HEK293 (cell line): ENCODE measurements at regions of chr4 and their contacts with region 1.

Region 1: DNA sequence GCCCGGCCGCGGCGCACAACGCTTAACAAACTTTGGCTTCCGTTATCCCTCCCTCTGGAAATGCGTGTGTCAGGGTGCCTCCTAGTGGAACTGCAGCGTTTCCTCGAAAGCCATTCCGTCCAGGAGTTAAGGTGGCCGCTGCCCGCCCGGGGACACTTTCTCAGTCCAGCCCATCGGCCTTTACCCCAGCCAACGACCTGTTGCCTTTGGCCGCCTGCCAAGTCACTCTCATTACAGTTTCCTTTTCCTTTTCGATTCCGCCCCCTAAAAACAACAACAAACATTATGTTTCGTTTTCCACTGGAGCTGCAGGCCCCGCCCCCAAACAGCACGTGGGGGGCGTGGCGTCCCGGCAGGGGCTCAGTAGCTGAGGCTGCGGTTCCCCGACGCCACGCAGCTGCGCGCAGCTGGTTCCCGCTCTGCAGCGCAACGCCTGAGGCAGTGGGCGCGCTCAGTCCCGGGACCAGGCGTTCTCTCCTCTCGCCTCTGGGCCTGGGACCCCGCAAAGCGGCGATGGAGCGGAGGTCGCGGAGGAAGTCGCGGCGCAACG is at the start of gene HERC5:
- H3K4me3 ChIP-seq: peak within 1 kb of the TSS; percentile 64
- H3K27ac ChIP-seq: peak within 1 kb of the TSS; percentile 57; the same call in 1 of the 2 replicates
- H3K4me1 ChIP-seq: no peaks in the 10 kb centered on the region
- CTCF ChIP-seq: peak; percentile 89

Region 2: DNA sequence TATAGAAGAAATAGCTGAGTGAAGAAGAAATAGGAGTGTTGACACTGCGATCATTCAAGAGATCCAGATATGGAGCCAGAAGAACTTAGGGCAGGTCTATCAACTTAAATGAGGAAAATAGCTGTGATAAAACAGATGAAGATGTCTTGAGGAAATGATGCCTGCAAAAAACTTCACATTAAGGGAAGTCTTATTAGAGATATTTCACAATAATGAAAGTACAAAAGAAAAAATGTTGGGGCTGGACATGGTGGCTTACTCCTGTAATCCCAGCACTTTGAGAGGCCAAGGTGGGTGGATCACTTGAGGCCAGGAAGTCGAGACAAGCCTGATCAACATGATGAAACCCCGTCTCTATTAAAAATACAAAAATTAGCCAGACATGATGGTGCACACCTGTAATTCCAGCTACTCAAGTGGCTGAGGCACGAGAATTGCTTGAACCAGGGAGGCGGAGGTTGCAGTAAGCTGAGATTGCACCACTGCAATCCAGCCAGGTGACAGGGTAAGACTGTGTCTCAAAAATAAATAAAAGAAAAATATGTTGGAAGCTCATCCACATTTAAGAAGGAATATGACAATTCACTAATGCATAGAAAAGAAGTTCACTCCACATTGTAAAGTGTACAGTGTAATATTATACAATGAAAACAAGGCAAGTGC is 393.1 kb before region 1 on chr4:
- CTCF ChIA-PET with region 1: no interaction called
- POLR2A ChIA-PET with region 1: no interaction called
- H3K4me3 ChIP-seq: no peak overlapping the region
- H3K27ac ChIP-seq: no peak overlapping the region
- H3K4me1 ChIP-seq: no peaks in the 10 kb centered on the region
- CTCF ChIP-seq: no peak

Region 3: GRCh38 chr4:88264336-88264735 is 192.5 kb before region 1 on chr4:
- CTCF ChIA-PET with region 1: no interaction called
- POLR2A ChIA-PET with region 1: no interaction called
- H3K4me3 ChIP-seq: no peak overlapping the region
- H3K27ac ChIP-seq: no peak overlapping the region
- H3K4me1 ChIP-seq: no peaks in the 10 kb centered on the region
- CTCF ChIP-seq: no peak

Region 4: DNA sequence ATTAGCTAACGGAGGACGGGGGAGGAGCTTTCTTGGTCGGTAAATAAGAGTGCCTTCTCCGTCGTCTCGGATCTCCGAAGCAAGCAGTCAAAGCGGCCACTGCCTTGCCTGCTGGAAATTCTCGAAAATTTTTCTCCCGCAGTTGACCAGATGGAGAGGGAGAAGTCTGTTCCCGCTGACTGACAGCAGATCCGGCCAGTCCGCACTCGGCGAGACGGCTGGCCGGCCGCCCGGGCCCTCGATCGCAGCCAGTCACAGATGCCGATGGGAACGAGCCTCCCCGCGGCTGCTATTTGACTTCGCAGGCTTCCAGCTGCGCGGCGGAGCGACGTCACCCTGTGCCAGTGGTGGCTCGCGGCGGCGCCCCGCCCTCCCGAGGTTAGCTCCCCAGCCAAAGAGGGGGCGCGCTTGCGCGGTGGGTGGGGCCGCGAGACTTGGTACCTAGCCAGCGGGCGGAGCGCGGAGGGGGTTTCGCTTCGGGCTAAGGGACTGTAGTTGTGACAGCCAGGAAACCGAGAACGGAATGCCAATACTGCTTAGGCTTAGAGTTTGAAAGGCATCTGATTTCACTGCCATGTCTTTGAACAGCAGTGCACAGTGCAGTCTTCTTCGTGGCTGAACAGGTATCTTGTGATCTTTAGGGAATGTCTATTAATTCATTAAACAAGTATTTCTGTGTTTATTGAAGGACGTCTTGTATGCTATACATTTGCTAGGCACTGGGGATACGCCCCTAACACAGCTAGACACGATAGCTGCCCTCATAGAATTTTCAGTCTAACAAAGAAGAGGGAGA is 172.2 kb before region 1 on chr4 and contains the start of gene PPM1K:
- CTCF ChIA-PET with region 1: interaction called, 6 read pairs
- POLR2A ChIA-PET with region 1: interaction called, 12 read pairs
- H3K4me3 ChIP-seq: peak within 1 kb of the TSS; percentile 65
- H3K27ac ChIP-seq: peak within 1 kb of the TSS; percentile 89
- H3K4me1 ChIP-seq: peaks cover 3% of the 10 kb centered on the region; the same call in 1 of the 2 replicates
- CTCF ChIP-seq: peak; percentile 49; the same call in 1 of the 2 replicates

Region 5: DNA sequence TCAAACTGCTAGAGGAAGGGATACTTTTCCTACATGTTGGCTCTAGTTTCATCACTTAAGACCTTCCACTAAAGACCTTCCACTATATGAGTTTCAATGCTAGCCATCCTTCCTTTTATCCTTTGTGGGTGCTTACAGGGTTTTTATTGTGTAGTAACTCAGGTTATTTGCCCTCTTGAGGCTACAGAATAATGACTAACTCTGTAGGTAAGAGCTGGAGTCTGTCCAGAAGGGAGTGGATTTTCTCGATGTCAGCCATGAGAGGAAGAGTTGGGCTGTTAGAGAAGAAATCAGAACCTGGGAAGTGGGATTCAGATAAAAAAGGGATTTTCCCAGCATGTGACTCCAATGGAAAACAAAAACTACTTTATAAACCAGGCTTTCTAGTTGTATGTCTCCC is 27.4 kb before region 1 on chr4:
- CTCF ChIA-PET with region 1: no interaction called
- POLR2A ChIA-PET with region 1: no interaction called
- H3K4me3 ChIP-seq: no peak overlapping the region
- H3K27ac ChIP-seq: no peak overlapping the region
- H3K4me1 ChIP-seq: no peaks in the 10 kb centered on the region
- CTCF ChIP-seq: no peak